RWPE1 (cell line): ENCODE measurements at regions of chr6 and their contacts with region 1.

Region 1: DNA sequence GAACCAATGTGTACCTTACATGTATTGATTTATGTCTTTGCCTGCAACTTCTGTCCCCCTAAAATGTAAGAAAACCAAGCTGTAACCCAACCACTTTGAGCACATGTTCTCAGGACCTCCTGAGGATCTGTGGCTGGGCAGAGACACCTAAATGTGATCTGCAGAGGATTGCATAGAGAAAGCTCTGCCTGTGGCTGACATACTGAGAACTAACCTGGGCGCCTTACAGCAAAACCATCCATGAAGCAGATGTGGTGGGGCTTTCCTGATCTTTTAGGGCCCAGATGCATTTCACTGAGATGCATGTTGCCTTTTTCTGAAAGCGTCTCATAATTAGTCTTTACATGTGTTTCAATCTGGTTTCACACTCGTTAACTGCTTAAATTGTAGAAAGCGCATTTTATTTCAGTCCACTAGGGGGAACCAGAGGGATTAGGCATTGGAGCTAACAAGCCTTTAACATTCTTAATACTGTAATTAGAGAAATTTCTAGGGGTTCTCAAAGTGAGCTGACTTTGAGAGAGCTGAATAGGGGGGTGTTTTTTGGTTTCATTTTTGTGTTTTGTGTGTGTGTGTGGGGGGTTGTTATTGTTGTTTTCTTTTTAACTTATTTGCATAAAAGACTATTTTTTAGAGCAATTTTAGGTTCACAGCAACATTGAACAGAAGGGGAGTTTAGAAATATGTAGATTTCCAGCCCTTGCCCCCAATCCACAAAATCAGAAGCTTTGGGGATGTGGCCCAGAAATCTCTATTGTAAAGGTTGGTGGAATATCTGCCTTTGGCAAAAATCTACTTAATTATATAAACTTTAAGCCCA is 50.9 kb upstream of the FAM184A start:
- DNase-seq: peak; percentile 38
- H3K27ac ChIP-seq: no peak overlapping the region
- CTCF ChIP-seq: peak; percentile 86

Region 2: GRCh38 chr6:119974430-119975159 is 845.2 kb after region 1 on chr6:
- CTCF ChIA-PET with region 1: interaction called, 10 read pairs
- POLR2A ChIA-PET with region 1: no interaction called
- DNase-seq: no peak
- H3K27ac ChIP-seq: no peak overlapping the region
- CTCF ChIP-seq: no peak